ENCODE measurements at regions of chr14 and their contacts with region 1.

Region 1: DNA sequence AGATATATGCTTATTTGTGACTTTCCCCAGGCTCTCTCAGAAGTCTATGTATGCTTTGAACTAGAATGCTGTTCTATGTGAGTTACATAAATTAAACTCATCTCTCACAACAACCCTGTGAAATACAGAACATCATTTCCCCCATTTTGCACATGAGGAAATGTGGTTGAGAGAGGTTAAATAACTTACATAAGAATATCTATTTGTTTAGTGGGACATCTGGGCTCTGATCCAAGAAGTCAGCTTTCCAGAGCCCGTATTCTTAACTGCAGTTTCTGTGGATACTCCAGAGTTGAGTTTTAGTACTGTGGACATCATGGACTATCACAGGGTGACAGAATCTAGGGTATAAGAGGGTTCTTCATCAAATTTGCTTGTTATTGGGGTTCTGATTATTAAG is 242.5 kb upstream of the ARHGAP5 start:
- DNase-seq: no peak
- ATAC-seq: peak in 1 of 8 donors; percentile 31
- H3K4me3 ChIP-seq: no peak overlapping the region
- H3K27ac ChIP-seq: no peak overlapping the region
- H3K4me1 ChIP-seq: peaks cover 0 to 7% (median 0%) of the 10 kb centered on the region in 9 donors
- H3K27me3 ChIP-seq: no peaks in the 10 kb centered on the region
- CTCF ChIP-seq: no peak

Region 2: DNA sequence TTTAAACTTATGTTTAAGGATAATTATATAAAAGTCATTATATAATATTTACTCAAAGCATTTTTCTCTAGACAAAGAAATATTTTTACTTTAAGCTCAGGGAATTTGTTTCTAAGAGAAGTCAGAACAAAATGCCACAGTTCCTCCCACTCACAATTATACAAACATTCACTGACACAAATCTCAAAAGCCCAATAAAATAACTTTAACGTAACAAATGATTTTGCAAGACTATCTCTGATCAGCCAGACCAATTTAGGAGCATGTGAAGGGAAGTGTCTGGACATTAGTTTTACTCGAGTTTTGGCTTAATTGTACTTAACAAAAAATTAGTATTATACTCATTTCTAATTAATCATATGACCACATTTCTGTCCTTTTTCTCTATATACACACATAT is 919.0 kb before region 1 on chr14:
- intact Hi-C with region 1: no loop called
- DNase-seq: no peak
- ATAC-seq: no peak
- H3K4me3 ChIP-seq: no peak overlapping the region
- H3K27ac ChIP-seq: no peak overlapping the region
- H3K4me1 ChIP-seq: no peaks in the 10 kb centered on the region
- H3K27me3 ChIP-seq: no peaks in the 10 kb centered on the region
- CTCF ChIP-seq: no peak

Region 3: DNA sequence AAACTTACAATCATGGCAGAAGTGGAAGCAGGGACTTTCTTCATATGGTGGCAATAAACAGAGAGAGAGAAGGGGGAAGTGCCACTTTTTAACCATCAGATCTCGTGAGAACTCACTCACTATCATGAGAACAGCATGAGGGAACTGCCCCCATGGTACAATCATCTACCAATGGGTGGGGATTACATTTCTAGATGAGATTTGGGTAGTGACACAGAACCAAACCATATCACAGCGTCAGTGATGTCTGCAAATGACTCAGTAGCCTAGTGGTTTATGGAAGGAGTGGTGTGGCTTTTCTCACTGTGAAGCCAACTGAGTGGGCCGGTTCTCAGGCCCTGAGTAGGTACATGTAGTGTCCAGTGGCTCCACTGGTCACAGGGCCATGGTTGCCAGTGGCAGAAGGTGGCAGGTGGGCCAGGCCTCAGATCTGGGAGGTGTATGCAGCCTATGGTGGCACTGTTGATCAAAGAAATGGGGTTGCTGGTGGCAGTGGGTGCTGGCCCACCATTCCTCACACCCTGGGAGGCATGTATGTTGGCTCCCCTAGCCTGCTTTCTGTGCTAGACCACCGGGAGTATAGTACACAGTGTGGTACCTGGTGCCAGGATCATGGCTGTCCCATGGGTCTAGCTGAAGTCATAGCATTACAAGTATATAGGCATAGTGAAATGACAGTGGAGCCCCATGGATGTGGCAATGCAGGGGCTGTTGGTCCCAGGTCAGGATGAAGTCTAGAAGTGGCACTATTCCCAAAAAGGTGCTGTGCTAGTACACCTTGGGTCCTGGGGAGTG is 81.6 kb before region 1 on chr14:
- intact Hi-C with region 1: no loop called
- DNase-seq: no peak
- ATAC-seq: no peak
- H3K4me3 ChIP-seq: no peak overlapping the region
- H3K27ac ChIP-seq: no peak overlapping the region
- H3K4me1 ChIP-seq: no peaks in the 10 kb centered on the region
- H3K27me3 ChIP-seq: no peaks in the 10 kb centered on the region
- CTCF ChIP-seq: no peak

Region 4: DNA sequence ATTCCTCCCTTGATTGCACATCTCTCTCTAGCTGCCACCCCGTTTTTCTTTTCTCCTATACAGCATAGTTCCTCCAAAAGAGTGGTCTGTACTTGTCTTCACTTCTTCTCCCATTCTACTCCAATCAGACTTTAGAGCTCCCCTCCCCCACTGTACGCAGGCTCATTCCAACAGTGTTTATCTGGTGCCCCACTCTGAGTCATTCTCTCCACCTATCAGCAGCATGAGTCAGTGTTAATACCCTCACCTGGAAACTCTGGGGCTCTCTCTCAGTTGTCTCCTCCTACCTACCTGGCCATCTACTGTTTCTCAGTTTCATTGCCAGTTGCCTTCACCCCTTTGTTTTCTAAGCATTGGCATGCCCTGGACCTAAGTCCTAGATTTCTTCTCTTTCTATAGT is 67.4 kb after region 1 on chr14:
- intact Hi-C with region 1: loop called in 1 of 10 experiments (anchors 10 kb)
- DNase-seq: no peak
- ATAC-seq: no peak
- H3K4me3 ChIP-seq: no peak overlapping the region
- H3K27ac ChIP-seq: no peak overlapping the region
- H3K4me1 ChIP-seq: peaks cover 0 to 10% (median 1%) of the 10 kb centered on the region in 9 donors
- H3K27me3 ChIP-seq: no peaks in the 10 kb centered on the region
- CTCF ChIP-seq: no peak

Measured in heart right ventricle (tissue), 16 donors.